H1 (cell line): ENCODE measurements at regions of chr12 and their contacts with region 1.

Region 1: DNA sequence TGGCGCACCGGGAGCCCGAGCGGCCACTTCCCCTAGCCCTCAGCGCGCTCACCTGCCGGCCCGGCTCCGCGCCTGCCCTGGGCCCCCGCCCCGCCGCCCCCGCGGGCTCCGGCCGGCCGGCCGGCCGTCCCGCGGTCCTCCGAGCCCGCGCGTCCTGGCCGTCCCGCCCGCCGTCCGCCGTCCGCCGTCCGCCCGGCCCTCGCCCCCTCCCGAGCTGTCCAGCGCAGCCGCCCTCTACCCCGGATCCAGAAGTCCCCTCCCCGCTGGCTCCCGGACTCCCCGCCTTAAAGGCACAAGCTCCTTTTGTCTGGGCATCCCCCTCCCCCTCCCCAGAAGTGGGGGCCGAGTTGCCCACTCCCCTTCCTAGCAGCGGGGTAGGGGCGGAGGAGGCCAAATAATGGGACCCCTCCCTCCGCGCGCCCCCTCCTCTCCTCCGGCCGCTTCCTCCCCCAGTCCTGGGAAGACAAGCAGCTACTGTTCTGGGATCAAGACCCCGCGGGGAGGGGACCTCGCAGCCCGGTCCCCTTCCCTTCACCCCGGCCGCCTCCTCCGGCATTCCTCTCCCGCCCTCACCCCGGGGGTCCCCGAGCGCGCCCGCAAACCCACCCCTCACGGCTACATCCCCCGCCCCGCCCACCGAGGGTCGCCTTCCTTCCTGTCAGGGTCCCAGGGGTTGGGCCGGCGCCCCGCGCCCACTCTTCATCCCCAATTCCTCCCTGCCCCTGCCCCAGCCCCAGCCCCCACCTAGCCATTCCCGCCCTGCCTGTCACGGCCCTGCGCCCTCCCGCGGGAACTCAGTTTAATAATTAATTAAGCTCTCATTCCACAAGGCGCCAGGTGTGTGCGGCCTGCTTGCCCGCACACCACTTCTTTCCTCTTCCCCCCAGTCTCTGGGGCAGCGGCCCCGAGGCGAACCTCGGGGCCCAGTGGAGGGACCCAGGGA is at the start of gene ADCY6:
- DNase-seq: peak in 1 of 2 experiments; percentile 86
- H3K4me3 ChIP-seq: peak within 1 kb of the TSS; percentile 72 to 95 (median 78)
- H3K27ac ChIP-seq: no peak within 1 kb of the TSS
- H3K4me1 ChIP-seq: peaks cover 6 to 13% (median 8%) of the 10 kb centered on the region in 4 experiments
- H3K27me3 ChIP-seq: peaks cover 0 to 2% (median 0%) of the 10 kb centered on the region in 4 experiments; a peak in 1 of 7 replicates
- CTCF ChIP-seq: no peak
- EP300 ChIP-seq: no peak
- POLR2A ChIP-seq: no peak
- RAD21 ChIP-seq: no peak
- total RNA-seq, gene ADCY6: 11.7 and 15.6 TPM in 2 replicates

Region 2: GRCh38 chr12:48750769-48751735 is 38.1 kb before region 1 on chr12:
- CTCF ChIA-PET with region 1: interaction called, 205 read pairs
- POLR2A ChIA-PET with region 1: interaction called, 15 read pairs
- DNase-seq: no peak
- H3K4me3 ChIP-seq: no peak overlapping the region
- H3K27ac ChIP-seq: no peak overlapping the region
- H3K4me1 ChIP-seq: no peaks in the 10 kb centered on the region
- H3K27me3 ChIP-seq: no peaks in the 10 kb centered on the region
- CTCF ChIP-seq: no peak
- EP300 ChIP-seq: no peak
- POLR2A ChIP-seq: no peak
- RAD21 ChIP-seq: no peak

Region 3: GRCh38 chr12:48758221-48758620 is 30.9 kb before region 1 on chr12:
- CTCF ChIA-PET with region 1: interaction called, 205 read pairs
- POLR2A ChIA-PET with region 1: interaction called, 15 read pairs
- DNase-seq: no peak
- H3K4me3 ChIP-seq: no peak overlapping the region
- H3K27ac ChIP-seq: no peak overlapping the region
- H3K4me1 ChIP-seq: no peaks in the 10 kb centered on the region
- H3K27me3 ChIP-seq: no peaks in the 10 kb centered on the region
- CTCF ChIP-seq: no peak
- EP300 ChIP-seq: no peak
- POLR2A ChIP-seq: no peak
- RAD21 ChIP-seq: no peak

Region 4: DNA sequence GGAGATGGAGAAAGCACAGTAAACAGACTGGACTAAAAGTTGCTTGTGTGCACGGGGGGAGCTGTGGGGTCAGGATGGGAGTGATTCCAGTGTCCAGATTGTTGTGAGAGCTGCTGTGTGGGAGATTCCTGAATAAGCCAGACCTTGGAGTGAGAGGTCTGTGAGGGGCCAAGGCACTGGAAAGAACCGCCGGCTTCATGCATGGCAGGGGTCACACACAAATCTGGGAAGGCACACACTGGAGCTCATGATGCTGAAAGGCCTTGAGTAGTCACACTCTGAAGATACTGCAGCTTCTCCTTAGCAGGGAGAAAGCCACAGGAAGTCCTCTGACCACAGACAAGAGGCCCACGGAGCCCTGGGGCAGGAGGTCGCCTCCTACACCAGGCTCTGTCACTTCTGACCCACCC is 23.4 kb before region 1 on chr12:
- CTCF ChIA-PET with region 1: interaction called, 69 read pairs
- POLR2A ChIA-PET with region 1: interaction called, 11 read pairs
- DNase-seq: no peak
- H3K4me3 ChIP-seq: no peak overlapping the region
- H3K27ac ChIP-seq: no peak overlapping the region
- H3K4me1 ChIP-seq: peaks cover 0 to 14% (median 9%) of the 10 kb centered on the region in 4 experiments; a peak in 6 of 7 replicates
- H3K27me3 ChIP-seq: no peaks in the 10 kb centered on the region
- CTCF ChIP-seq: no peak
- EP300 ChIP-seq: no peak
- POLR2A ChIP-seq: no peak
- RAD21 ChIP-seq: no peak

Region 5: DNA sequence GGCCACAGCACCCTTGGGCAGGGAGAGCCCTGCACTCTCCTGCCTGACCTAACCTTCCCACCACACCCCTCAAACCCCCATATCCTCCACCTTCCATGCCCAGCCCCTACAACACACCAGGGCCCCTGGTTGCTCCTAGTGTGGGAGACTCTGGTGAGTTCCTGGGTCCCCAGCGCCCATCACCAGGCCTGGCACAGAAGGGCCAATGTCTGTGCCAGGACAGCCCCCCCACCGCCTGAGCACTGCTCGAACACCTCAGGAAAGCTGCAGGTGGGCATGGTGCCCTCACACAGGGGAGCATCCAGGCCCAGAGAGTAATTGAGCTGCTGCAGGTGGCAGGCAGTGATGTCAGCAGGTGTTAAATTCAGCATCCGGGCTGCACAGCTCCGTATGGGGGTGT is 15.4 kb before region 1 on chr12:
- CTCF ChIA-PET with region 1: interaction called, 12 read pairs
- POLR2A ChIA-PET with region 1: interaction called, 11 read pairs
- DNase-seq: no peak
- H3K4me3 ChIP-seq: no peak overlapping the region
- H3K27ac ChIP-seq: no peak overlapping the region
- H3K4me1 ChIP-seq: peaks cover 0 to 16% (median 12%) of the 10 kb centered on the region in 4 experiments; a peak in 6 of 7 replicates
- H3K27me3 ChIP-seq: no peaks in the 10 kb centered on the region
- CTCF ChIP-seq: no peak
- EP300 ChIP-seq: no peak
- POLR2A ChIP-seq: no peak
- RAD21 ChIP-seq: no peak

Region 6: GRCh38 chr12:48814262-48815125 is 25.4 kb after region 1 on chr12:
- CTCF ChIA-PET with region 1: interaction called, 20 read pairs
- POLR2A ChIA-PET with region 1: interaction called, 17 read pairs
- DNase-seq: peak in 1 of 2 experiments; percentile 94
- H3K4me3 ChIP-seq: peak overlapping the region; percentile 59 to 94 (median 88)
- H3K27ac ChIP-seq: no peak overlapping the region
- H3K4me1 ChIP-seq: peaks cover 0 to 27% (median 19%) of the 10 kb centered on the region in 4 experiments; a peak in 6 of 7 replicates
- H3K27me3 ChIP-seq: peaks cover 17 to 46% (median 36%) of the 10 kb centered on the region in 4 experiments
- CTCF ChIP-seq: peak in 2 of 3 experiments; percentile 95 to 99; a peak in 3 of 4 replicates
- EP300 ChIP-seq: no peak; a peak in 1 of 3 replicates
- POLR2A ChIP-seq: no peak
- RAD21 ChIP-seq: peak in 1 of 2 experiments; percentile 48; a peak in 2 of 4 replicates

Region 7: DNA sequence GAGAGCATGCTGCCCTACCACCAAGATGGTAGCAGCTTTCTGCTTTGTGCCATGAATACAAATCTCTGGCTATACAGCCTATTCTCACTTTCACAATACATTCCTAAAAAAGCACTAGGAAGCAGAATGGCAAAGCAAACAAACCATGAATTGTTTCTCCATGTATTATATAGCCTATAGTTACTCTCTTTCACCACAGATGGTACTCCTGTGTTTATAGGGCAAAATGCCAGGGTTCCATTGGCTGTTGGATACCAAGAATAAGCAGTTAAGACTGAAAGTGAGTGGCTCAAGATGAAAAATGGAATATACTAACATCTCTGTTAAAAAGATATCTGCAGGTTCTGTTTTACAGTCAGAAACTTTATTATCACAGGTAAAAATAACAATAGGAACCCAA is 157.1 kb after region 1 on chr12:
- CTCF ChIA-PET with region 1: no interaction called
- POLR2A ChIA-PET with region 1: no interaction called
- DNase-seq: no peak
- H3K4me3 ChIP-seq: no peak overlapping the region
- H3K27ac ChIP-seq: no peak overlapping the region
- H3K4me1 ChIP-seq: no peaks in the 10 kb centered on the region; a peak in 1 of 7 replicates
- H3K27me3 ChIP-seq: no peaks in the 10 kb centered on the region
- CTCF ChIP-seq: no peak
- EP300 ChIP-seq: no peak
- POLR2A ChIP-seq: no peak
- RAD21 ChIP-seq: no peak